Left lung (tissue), 14 donors: ENCODE measurements at regions of chr13 and their contacts with region 1.

Region 1: GRCh38 chr13:49606747-49607648 is 21.3 kb upstream of the ARL11 start:
- DNase-seq: peak; percentile 75 to 95 (median 90)
- ATAC-seq: peak; percentile 100
- H3K4me3 ChIP-seq: peak overlapping the region; percentile 8 to 36
- H3K27ac ChIP-seq: no peak overlapping the region
- H3K4me1 ChIP-seq: peaks cover 0 to 22% of the 10 kb centered on the region in 2 donors
- H3K27me3 ChIP-seq: no peaks in the 10 kb centered on the region
- CTCF ChIP-seq: peak; percentile 71 to 78

Region 2: DNA sequence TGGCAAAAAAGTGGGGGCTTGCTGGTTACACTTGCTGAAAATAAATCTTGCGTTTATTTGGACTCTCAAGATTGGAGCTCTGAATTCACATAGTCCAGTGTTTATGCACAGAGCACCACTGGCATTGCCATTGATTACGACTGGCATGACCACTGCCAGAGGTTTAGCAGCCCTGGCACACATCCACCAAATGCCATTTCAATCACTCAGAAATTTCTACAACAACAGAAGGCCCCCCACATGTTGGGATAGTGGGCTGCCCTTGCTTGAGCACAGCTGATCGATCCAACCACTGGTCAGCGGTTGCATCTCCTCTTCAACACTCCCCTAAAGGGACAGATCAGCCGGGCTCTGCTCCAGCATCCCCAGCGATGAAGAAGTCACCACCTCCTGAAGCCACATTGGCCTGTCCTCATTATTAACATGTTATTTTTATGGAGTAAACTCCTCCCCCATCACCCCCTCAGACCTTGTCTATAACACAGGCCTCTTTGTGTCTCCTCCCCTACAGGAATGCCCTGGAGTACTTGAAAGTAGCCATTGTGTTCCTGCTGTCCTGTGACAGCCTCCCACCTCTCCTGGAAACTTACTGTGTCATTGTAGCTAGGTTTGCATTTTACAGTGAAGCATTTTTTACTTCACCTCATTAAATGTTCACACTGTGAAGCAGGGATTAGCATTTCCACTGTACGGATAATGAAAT is 307.9 kb before region 1 on chr13:
- intact Hi-C with region 1: loop called in 1 of 2 experiments (anchors 5 kb)
- DNase-seq: no peak
- ATAC-seq: no peak
- H3K4me3 ChIP-seq: no peak overlapping the region
- H3K27ac ChIP-seq: no peak overlapping the region
- H3K4me1 ChIP-seq: peaks cover 0 to 15% of the 10 kb centered on the region in 2 donors
- H3K27me3 ChIP-seq: no peaks in the 10 kb centered on the region
- CTCF ChIP-seq: no peak

Region 3: DNA sequence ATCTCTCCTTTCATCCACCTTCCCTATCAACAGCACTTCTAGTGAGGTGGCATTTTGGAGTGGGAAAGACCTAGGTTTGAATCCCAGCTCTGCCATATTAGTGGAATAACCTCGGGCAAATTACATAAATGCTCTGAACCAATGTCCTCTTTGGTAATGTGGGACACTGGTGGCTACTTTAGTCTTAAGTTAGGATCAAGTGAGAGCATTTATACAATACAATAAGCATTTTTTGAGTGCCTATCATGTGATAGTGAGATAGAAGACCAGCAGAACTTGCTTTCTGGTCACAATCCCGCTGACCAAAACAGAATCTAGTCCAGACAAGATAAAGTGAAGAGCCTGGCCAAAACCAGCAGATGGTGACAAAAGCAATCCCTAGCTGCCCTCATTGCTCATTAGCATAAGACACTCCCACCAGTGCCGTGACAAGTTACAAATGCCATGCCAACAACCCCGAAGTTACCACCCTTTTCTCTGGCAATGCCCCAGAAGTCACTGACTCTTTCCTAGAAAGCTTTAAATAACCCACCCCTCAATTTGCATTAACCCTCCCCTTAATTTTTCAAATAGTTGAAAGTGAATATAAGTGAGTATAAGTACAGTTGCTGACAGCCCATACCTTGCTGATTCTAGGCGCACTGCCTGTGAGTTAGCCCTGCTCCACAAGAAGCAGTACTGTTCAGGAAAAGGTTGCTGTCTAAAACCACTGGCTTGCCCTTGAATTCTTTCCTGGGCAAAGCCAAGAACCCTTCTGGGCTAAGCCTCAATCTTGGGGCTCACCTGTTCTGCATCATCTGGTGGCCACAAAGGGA is 214.4 kb after region 1 on chr13:
- intact Hi-C with region 1: no loop called
- DNase-seq: no peak
- ATAC-seq: no peak
- H3K4me3 ChIP-seq: no peak overlapping the region
- H3K27ac ChIP-seq: no peak overlapping the region
- H3K4me1 ChIP-seq: no peaks in the 10 kb centered on the region
- H3K27me3 ChIP-seq: no peaks in the 10 kb centered on the region
- CTCF ChIP-seq: no peak

Region 4: DNA sequence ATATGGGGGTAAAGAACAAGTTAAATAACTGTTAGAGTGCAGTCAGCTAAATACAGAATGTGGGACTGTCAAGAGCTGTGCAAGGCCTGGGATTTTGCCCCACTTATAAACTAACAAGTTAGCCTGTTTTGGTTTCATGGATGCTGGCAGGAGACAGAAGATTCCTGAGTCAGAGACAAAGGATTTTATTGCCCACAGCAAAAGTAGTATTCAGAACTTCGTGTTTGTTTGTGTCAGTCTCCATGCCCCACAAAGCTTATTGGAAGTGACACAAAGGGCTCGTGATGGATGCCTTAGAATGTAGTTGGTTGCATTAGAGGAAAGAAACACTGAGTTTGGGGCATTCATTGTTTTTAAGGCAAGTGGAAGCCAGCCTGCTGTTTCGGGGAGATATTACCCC is 351.3 kb after region 1 on chr13:
- intact Hi-C with region 1: no loop called
- DNase-seq: no peak
- ATAC-seq: no peak
- H3K4me3 ChIP-seq: no peak overlapping the region
- H3K27ac ChIP-seq: no peak overlapping the region
- H3K4me1 ChIP-seq: no peaks in the 10 kb centered on the region
- H3K27me3 ChIP-seq: no peaks in the 10 kb centered on the region
- CTCF ChIP-seq: no peak